ENCODE measurements at regions of chr1 and their contacts with region 1.

Region 1: DNA sequence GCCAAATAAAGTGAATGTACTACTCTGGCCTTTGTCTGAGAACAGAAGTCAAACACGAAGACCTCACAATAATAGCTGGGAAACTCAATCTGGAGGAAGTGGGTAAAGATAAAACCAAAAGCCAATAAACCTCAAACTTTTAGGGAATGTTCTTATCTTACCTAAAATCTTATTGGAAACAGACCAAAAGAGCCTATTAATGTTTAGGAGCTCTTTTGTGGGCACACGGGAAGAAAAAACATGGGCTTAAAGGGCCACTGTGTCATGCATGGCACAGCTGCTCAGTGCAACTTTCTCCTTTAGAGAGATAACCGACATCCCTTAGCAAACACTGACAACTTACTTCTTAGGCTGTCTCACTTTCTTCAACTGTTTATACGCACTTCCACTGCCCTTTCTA is 16.1 kb downstream of the EIF2B3 start:
- DNase-seq: peak; percentile 80
- H3K4me3 ChIP-seq: no peak overlapping the region
- H3K27ac ChIP-seq: peak overlapping the region; percentile 56
- H3K4me1 ChIP-seq: peaks cover 35% of the 10 kb centered on the region
- H3K27me3 ChIP-seq: no peaks in the 10 kb centered on the region
- CTCF ChIP-seq: no peak
- POLR2A ChIP-seq: no peak

Region 2: GRCh38 chr1:44947063-44947773 is 23.1 kb before region 1 on chr1:
- CTCF ChIA-PET with region 1: interaction called, 6 read pairs
- POLR2A ChIA-PET with region 1: no interaction called
- dilution Hi-C with region 1: no loop called
- intact Hi-C with region 1: loop called (anchors 1 kb)
- DNase-seq: peak; percentile 92
- H3K4me3 ChIP-seq: no peak overlapping the region
- H3K27ac ChIP-seq: peak overlapping the region; percentile 48
- H3K4me1 ChIP-seq: peaks cover 20% of the 10 kb centered on the region
- H3K27me3 ChIP-seq: no peaks in the 10 kb centered on the region
- CTCF ChIP-seq: no peak
- POLR2A ChIP-seq: no peak

Region 3: GRCh38 chr1:45001011-45001481 is 30.7 kb after region 1 on chr1:
- CTCF ChIA-PET with region 1: no interaction called
- POLR2A ChIA-PET with region 1: no interaction called
- dilution Hi-C with region 1: no loop called
- intact Hi-C with region 1: no loop called
- DNase-seq: no peak
- H3K4me3 ChIP-seq: no peak overlapping the region
- H3K27ac ChIP-seq: no peak overlapping the region
- H3K4me1 ChIP-seq: no peaks in the 10 kb centered on the region
- H3K27me3 ChIP-seq: no peaks in the 10 kb centered on the region
- CTCF ChIP-seq: no peak
- POLR2A ChIP-seq: no peak